Activated CD4-positive, alpha-beta T cell treated with anti-CD3 and anti-CD28 coated beads, Interleukin-2, amount 10 ng/mL, durations not matched to agents 24 days and 14 days (primary cell): ENCODE measurements at regions of chr1 and their contacts with region 1.

Region 1: DNA sequence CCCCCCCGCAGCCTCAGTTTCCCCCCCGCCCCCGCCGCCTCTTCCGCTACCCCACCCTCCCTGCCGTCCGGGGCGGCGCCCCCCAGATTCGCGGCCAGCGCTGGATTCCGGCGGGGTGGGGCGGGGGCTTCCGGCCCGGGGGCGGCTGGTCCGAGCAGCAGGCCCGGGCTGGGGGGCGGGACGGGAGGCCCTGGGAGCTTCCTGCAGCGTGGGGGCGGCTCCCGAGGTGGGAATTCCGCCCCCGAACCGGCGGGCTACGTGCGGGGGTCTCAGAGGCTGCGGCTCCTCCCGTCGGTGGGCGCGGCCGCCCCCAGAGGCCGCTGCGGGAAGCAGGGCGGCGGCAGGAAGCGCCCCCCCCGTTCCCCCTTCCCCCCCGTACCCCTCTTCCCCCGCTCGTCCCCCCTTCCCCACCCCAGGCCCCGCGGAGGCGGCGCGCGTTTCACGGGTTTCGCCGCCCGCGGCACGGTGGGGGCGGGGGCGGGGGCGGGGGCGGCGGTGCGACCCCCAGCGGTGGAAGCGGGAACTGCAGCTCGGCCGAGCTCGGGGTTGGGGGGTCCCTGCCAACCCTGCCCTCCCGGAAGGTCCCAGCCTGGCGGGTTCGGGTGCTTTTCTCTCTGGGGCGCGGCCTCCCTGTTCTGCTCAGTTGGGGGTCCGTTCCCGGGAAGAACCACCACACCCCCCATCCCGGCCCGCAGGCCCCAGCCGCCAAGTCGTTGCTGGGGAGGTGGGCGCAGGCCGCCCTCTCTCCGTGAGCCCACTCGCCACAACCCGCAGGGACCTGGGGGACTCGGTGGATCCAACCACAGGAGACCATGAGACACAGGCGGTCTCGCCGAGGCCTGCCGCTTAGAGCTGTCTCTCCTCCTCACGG is 76.3 kb downstream of the MORN1 start:
- DNase-seq: peak; percentile 88
- H3K4me3 Mint-ChIP-seq: peak overlapping the region; percentile 60
- H3K27ac Mint-ChIP-seq: peak overlapping the region; percentile 67
- H3K4me1 Mint-ChIP-seq: peaks cover 2% of the 10 kb centered on the region
- H3K27me3 Mint-ChIP-seq: no peaks in the 10 kb centered on the region

Region 2: DNA sequence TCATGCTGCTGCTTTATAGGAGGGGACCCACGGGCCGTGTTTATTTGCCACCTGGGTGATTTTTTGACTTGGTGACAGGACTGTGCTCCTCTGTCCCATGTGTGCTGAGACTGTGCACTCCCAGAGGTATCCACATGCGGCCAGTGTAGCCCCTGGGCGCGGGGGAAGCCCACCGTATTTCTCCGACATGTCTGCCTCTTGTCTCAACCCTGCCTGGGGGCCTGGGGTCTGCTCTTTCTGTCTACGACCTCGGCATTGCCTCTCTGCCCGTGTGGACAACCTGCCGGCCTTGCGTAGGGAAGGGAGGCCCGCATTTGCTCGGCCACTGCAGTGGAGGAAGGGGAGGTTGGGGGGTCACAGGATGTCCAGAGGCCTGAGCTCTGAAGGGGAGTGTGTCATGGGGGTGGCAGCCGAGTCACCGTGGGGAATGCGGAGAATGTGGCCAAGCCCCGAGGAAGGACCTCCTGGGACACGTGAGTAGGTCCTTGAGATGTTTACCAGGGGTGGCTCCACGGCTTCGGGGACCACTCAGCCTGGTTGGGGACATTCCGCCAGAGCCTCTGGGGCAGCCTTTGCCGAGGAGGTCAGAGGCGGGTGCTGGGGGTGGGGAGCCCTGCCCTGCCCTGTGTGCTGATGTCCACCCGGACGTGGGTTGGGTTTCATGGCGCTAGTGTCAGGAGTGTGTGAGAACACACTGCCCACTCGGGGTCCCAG is 253.8 kb before region 1 on chr1:
- intact Hi-C with region 1: no loop called
- DNase-seq: no peak
- H3K4me3 Mint-ChIP-seq: no peak overlapping the region
- H3K27ac Mint-ChIP-seq: no peak overlapping the region
- H3K4me1 Mint-ChIP-seq: no peaks in the 10 kb centered on the region
- H3K27me3 Mint-ChIP-seq: no peaks in the 10 kb centered on the region

Region 3: DNA sequence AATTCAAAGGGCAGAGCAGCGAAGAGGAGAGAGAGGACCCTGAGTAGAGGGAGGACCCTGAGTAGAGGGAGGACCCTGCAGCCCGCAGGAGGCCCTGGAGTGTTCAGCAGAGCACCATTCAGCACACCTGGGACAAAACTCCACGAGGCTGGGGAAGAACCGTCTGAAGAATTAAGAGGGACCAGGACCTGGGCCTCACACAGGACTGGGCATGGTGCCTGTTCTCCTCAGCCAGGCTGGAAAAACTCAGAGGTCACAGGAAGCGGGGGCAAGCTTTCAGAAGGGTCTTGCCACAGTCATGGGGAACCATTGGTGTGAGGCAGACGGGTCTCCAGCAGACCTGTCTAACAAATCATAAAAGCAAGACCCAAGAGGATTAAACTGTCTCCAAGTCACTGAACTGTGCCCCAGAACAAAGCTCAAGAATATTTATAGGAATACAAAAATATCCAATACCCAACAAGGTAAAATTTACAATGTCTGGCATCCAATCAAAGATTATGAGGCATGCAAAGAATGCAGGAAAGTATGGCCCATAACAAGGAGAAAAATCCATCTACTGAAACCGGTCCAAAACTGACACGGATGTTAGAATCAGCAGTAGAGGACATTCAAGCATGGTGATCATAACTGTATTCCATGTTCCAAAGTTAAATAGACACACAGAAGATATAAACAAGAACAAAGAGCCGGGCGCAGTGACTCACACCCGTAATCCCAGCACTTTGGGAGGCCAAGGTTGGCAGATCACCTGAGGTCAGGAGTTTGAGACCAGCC is 45.7 kb after region 1 on chr1:
- intact Hi-C with region 1: no loop called
- DNase-seq: no peak
- H3K4me3 Mint-ChIP-seq: no peak overlapping the region
- H3K27ac Mint-ChIP-seq: no peak overlapping the region
- H3K4me1 Mint-ChIP-seq: no peaks in the 10 kb centered on the region
- H3K27me3 Mint-ChIP-seq: no peaks in the 10 kb centered on the region

Region 4: DNA sequence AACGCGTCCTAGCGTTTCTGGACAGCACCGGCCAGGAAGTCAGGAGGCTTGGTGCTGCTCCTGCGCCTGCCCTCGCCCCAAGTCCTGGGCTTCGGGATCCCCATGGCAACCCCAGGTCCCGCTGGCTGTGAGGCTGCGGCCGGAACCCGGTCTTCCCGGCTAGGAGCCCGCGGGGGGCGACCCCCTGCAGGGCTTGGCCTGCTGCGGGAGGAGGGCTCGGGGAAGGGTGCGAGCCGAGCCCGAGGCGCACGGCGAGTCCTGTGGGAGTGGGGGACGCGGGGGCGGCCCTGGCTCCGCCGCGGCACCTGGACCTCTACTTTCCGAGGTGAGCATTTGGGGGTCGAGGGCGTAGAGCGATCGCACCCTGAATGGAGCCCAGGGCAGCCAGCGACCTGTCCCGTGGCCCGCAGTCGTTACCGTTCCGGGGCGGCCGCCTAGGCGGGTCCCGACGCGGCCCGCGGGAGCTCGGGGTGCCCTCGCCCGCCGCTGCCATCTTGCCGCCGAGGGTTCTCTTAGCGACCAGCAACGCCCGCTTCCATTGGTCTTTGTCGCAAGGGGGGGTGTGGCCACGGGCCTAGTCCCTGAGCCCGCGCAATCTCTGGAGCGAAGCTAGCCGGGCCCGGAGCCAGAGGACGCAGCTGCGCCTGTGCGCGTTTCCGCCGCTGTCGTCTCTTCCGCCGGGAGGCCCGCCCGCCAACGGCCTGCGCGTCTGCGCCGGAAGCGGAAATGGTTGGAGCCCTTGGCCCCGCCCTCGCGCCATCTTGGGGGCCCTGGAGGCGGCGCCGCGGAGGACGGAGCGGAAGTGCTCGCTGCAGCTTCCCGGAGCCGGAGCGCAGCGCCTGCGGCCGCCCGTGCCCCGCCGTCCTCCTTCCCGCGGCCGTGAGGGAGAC is 76.2 kb after region 1 on chr1 and contains the starts of genes MORN1 and RER1:
- intact Hi-C with region 1: loop called (anchors 2 kb)
- DNase-seq: peak; percentile 100
- H3K4me3 Mint-ChIP-seq: peak within 1 kb of the TSS; percentile 90
- H3K27ac Mint-ChIP-seq: peak within 1 kb of the TSS; percentile 68
- H3K4me1 Mint-ChIP-seq: peaks cover 23% of the 10 kb centered on the region
- H3K27me3 Mint-ChIP-seq: no peaks in the 10 kb centered on the region
- total RNA-seq, gene MORN1: 9.0 and 11.1 TPM in 2 replicates
- total RNA-seq, gene RER1: 164 and 171 TPM in 2 replicates

Region 5: GRCh38 chr1:2612978-2613365 is 297.9 kb after region 1 on chr1:
- intact Hi-C with region 1: no loop called
- DNase-seq: no peak
- H3K4me3 Mint-ChIP-seq: no peak overlapping the region
- H3K27ac Mint-ChIP-seq: no peak overlapping the region
- H3K4me1 Mint-ChIP-seq: no peaks in the 10 kb centered on the region
- H3K27me3 Mint-ChIP-seq: peaks cover under 1% of the 10 kb centered on the region